ENCODE measurements at regions of chr12 and their contacts with region 1.

Region 1: GRCh38 chr12:127083008-127083949 is 1183.7 kb upstream of the TMEM132C start:
- DNase-seq: peak; percentile 65
- ATAC-seq: peak; percentile 89
- H3K4me3 ChIP-seq: peak overlapping the region; percentile 57
- H3K27ac ChIP-seq: no peak overlapping the region
- H3K4me1 ChIP-seq: no peaks in the 10 kb centered on the region
- H3K27me3 ChIP-seq: no peaks in the 10 kb centered on the region
- CTCF ChIP-seq: no peak
- POLR2A ChIP-seq: no peak
- RAD21 ChIP-seq: no peak

Region 2: DNA sequence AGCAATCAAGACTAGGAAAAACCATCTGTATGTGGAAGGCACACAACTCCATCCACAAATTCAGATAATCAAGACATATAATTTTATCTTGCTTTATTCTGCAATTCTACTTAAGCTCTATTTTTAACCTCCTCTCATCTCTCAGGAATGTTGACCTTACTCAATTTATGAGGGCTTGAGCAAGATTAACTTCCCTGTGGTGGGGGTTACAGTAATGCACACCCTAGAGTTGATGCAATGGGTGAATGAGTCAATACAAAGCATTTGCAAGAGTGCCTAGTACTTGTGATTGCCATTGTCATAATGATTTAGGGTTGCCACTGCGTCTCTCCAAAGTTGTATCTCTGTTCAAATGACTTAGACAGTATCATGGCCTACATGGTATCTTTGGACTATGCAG is 414.7 kb before region 1 on chr12:
- CTCF ChIA-PET with region 1: no interaction called
- POLR2A ChIA-PET with region 1: no interaction called
- dilution Hi-C with region 1: no loop called
- in situ Hi-C with region 1: no loop called
- intact Hi-C with region 1: loop called (anchors 5 kb)
- DNase-seq: no peak
- ATAC-seq: no peak
- H3K4me3 ChIP-seq: no peak overlapping the region
- H3K27ac ChIP-seq: no peak overlapping the region
- H3K4me1 ChIP-seq: no peaks in the 10 kb centered on the region
- H3K27me3 ChIP-seq: no peaks in the 10 kb centered on the region
- CTCF ChIP-seq: no peak
- POLR2A ChIP-seq: no peak
- RAD21 ChIP-seq: no peak

Measured in IMR-90 (cell line).